ENCODE measurements at regions of chr22 and their contacts with region 1.

Region 1: GRCh38 chr22:40107851-40108378 is 69.8 kb upstream of the TNRC6B start:
- DNase-seq: peak; percentile 14 to 50 (median 23)
- ATAC-seq: peak; percentile 77
- H3K4me3 ChIP-seq: no peak overlapping the region
- H3K27ac ChIP-seq: peak overlapping the region in 3 of 4 donors; percentile 5 to 49 (median 26)
- H3K4me1 ChIP-seq: peaks cover 23% of the 10 kb centered on the region
- H3K27me3 ChIP-seq: no peaks in the 10 kb centered on the region
- CTCF ChIP-seq: no peak
- POLR2A ChIP-seq: no peak

Region 2: GRCh38 chr22:40055143-40055883 is 52.6 kb before region 1 on chr22:
- intact Hi-C with region 1: loop called (anchors 10 kb)
- DNase-seq: no peak
- ATAC-seq: peak; percentile 33
- H3K4me3 ChIP-seq: no peak overlapping the region
- H3K27ac ChIP-seq: no peak overlapping the region
- H3K4me1 ChIP-seq: peaks cover 36% of the 10 kb centered on the region
- H3K27me3 ChIP-seq: no peaks in the 10 kb centered on the region
- CTCF ChIP-seq: no peak
- POLR2A ChIP-seq: no peak

Measured in body of pancreas (tissue), 4 donors.